ENCODE measurements at regions of chr5 and their contacts with region 1.

Region 1: GRCh38 chr5:180291943-180292831 is at the start of gene MAPK9:
- DNase-seq: peak; percentile 79 to 92 (median 86)
- ATAC-seq: peak; percentile 78 to 85 (median 84)
- H3K4me3 ChIP-seq: peak within 1 kb of the TSS; percentile 60 to 81
- H3K4me3 Mint-ChIP-seq: peak within 1 kb of the TSS; percentile 94 to 95 (median 95)
- H3K27ac ChIP-seq: peak within 1 kb of the TSS; percentile 87
- H3K27ac Mint-ChIP-seq: peak within 1 kb of the TSS; percentile 96
- H3K4me1 ChIP-seq: peaks cover 2 to 46% of the 10 kb centered on the region in 2 experiments
- H3K4me1 Mint-ChIP-seq: peaks cover 55 to 62% (median 57%) of the 10 kb centered on the region in 3 donors
- H3K27me3 ChIP-seq: no peaks in the 10 kb centered on the region
- H3K27me3 Mint-ChIP-seq: no peaks in the 10 kb centered on the region
- total RNA-seq, gene MAPK9: 28.3 to 35.8 (median 32.5) TPM

Region 2: DNA sequence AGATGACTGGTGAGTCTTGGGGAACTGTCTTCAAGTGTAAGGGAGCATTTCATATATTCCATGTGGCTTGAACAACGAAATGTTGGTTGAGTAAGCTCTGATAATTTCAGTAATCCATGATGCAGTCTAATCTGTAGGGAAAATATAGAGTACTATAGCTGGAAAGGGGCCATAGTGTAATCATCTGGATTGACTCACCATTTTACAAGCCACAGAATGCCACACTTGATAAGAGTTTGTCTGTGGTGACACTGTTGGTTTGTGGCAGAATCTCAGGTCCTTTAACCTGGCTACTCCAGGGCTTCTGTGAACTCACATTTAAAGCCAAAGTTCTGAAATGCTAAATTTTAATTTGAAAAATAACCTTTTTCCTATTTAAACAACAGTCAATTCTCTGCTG is 575.9 kb before region 1 on chr5:
- CTCF ChIA-PET with region 1: no interaction called
- POLR2A ChIA-PET with region 1: no interaction called
- DNase-seq: no peak
- ATAC-seq: no peak
- H3K4me3 ChIP-seq: no peak overlapping the region
- H3K4me3 Mint-ChIP-seq: no peak overlapping the region
- H3K27ac ChIP-seq: no peak overlapping the region
- H3K27ac Mint-ChIP-seq: no peak overlapping the region
- H3K4me1 ChIP-seq: no peaks in the 10 kb centered on the region
- H3K4me1 Mint-ChIP-seq: peaks cover 0 to 11% (median 9%) of the 10 kb centered on the region in 3 donors
- H3K27me3 ChIP-seq: no peaks in the 10 kb centered on the region
- H3K27me3 Mint-ChIP-seq: no peaks in the 10 kb centered on the region

Region 3: DNA sequence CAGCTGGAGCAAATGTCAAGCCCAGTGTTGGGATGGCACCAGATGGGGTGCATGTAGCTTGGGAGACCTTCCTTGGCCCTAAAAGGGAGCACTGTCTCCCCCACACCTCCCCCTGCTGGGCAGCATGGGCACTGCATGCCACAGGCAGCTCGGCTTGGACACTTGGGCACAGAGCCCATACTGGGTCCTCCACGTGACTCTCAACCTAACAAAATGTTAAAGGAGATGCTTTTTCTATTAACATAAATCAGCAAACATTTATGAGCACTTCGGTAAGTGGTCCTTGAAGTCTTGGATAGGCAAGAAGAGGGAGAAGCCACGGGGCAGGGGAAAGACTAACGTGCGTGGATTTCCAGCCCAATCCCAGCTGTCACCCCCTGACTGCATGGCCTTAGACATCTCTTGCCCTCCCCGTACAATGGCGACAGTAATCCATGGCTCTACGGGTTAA is 23.6 kb after region 1 on chr5:
- CTCF ChIA-PET with region 1: interaction called, 3 to 30 read pairs
- POLR2A ChIA-PET with region 1: no interaction called
- DNase-seq: peak in 34 of 35 experiments; percentile 42 to 82 (median 65)
- ATAC-seq: peak; percentile 59 to 82 (median 78)
- H3K4me3 ChIP-seq: no peak overlapping the region
- H3K4me3 Mint-ChIP-seq: no peak overlapping the region
- H3K27ac ChIP-seq: no peak overlapping the region
- H3K27ac Mint-ChIP-seq: peak overlapping the region in 1 of 2 donors; percentile 11
- H3K4me1 ChIP-seq: no peaks in the 10 kb centered on the region
- H3K4me1 Mint-ChIP-seq: no peaks in the 10 kb centered on the region
- H3K27me3 ChIP-seq: peaks cover 0 to 24% of the 10 kb centered on the region in 2 experiments
- H3K27me3 Mint-ChIP-seq: peaks cover 3 to 8% of the 10 kb centered on the region in 2 donors

Region 4: DNA sequence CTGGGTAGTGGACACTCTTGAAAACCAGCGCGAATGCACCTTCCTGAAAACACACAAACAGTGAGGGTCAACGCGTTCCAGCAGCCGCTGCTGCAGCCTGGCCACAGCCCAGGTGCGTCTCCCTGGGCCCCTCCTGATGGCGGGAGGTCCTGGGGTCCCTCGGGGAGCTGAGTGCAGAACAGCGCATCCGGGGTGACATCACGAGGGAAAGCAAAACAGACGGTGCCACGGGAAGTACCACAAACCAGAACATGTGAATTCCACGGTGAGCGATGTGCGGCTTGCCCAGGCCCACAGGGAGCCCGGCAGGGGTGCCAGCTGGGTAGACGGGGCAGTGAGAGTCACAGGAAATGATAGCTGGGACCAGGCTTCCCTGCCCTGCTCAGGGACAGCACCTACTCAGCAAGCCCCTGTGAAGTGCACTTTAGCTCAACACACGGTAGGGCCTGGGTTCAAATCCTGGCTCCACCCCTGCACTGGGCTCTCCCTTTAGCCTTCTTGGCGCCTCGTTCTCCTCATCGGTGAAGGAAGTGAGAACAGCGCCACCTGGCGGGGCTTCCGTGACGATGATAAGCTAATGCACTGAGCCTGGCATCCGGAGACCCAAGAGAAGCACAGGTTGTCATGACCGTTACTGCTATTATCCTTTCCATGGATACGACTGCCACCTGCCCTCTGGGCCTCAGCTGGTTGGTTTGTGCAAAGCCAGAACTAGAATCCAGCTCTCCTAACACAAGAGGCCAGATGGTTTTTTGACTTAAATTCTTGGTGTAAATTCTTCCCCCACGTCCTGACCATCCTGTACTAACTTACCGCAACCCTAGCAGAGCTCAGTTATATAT is 36.3 kb after region 1 on chr5:
- CTCF ChIA-PET with region 1: interaction called, 12 to 42 read pairs
- POLR2A ChIA-PET with region 1: interaction called, 3 to 4 read pairs
- DNase-seq: peak; percentile 65 to 93 (median 80)
- ATAC-seq: peak; percentile 90 to 95 (median 94)
- H3K4me3 ChIP-seq: no peak overlapping the region
- H3K4me3 Mint-ChIP-seq: no peak overlapping the region
- H3K27ac ChIP-seq: no peak overlapping the region
- H3K27ac Mint-ChIP-seq: no peak overlapping the region
- H3K4me1 ChIP-seq: peaks cover 0 to 5% of the 10 kb centered on the region in 2 experiments
- H3K4me1 Mint-ChIP-seq: peaks cover 0 to 2% (median 0%) of the 10 kb centered on the region in 3 donors
- H3K27me3 ChIP-seq: peaks cover 2 to 17% of the 10 kb centered on the region in 2 experiments
- H3K27me3 Mint-ChIP-seq: peaks cover 14 to 17% of the 10 kb centered on the region in 2 donors

Measured in T-cell (primary cell).